AG04450 (cell line): ENCODE measurements at regions of chr22 and their contacts with region 1.

Region 1: GRCh38 chr22:41403532-41404318 is 22.0 kb downstream of the TEF start:
- DNase-seq: peak; percentile 63
- H3K4me3 ChIP-seq: no peak overlapping the region
- H3K27ac ChIP-seq: no peak overlapping the region
- H3K27me3 ChIP-seq: no peaks in the 10 kb centered on the region
- CTCF ChIP-seq: peak; percentile 92

Region 2: GRCh38 chr22:41091132-41092022 is 312.3 kb before region 1 on chr22:
- CTCF ChIA-PET with region 1: no interaction called
- POLR2A ChIA-PET with region 1: no interaction called
- DNase-seq: peak; percentile 98
- H3K4me3 ChIP-seq: peak overlapping the region; percentile 85
- H3K27ac ChIP-seq: peak overlapping the region; percentile 99
- H3K27me3 ChIP-seq: no peaks in the 10 kb centered on the region
- CTCF ChIP-seq: no peak

Region 3: DNA sequence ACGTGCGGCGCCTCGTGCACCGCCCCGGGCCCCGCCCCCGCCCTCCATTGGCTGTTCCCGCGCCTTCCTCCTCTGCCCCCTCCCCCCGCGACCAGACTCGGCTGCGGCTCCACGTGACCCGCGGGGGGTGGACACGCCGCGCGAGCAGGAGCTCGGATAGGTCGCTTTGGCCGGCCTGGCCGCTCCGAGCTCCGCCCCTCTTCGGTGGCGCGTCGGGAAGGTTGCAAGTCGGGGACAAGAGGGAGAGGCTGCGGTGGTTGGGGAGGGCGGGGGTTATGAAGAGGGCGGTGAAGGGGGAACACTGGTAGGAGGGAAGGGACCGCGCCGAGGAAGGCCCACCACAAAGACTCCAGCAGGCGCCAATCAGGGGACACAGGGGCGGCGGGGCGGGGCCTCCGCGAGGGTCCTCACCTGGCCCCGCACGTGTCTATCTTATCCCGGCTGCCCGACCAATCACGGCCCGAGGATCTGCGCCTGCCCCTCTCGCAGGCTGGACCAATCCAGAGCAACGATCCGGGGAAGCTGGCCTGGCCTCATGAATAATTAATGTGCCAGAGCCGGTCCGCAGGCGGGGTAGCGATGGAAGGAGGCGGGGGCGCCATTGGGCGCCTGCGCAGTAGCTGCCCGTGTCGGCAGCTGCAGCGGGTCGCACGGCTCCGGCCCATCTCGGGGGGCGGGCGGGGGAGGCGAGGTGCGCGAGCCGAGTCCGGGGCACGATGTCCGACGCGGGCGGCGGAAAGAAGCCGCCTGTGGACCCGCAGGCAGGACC is 22.2 kb before region 1 on chr22 and contains the start of gene TEF:
- CTCF ChIA-PET with region 1: interaction called, 11 read pairs
- POLR2A ChIA-PET with region 1: interaction called, 26 read pairs
- DNase-seq: peak; percentile 98
- H3K4me3 ChIP-seq: peak within 1 kb of the TSS; percentile 74
- H3K27ac ChIP-seq: peak within 1 kb of the TSS; percentile 99
- H3K27me3 ChIP-seq: no peaks in the 10 kb centered on the region
- CTCF ChIP-seq: no peak
- polyA plus RNA-seq, gene TEF: 13.7 and 18.3 TPM in 2 replicates

Region 4: GRCh38 chr22:41448189-41448808 is 44.6 kb after region 1 on chr22:
- CTCF ChIA-PET with region 1: interaction called, 4 read pairs
- POLR2A ChIA-PET with region 1: interaction called, 20 read pairs
- DNase-seq: peak; percentile 97
- H3K4me3 ChIP-seq: peak overlapping the region; percentile 98
- H3K27ac ChIP-seq: peak overlapping the region; percentile 96
- H3K27me3 ChIP-seq: no peaks in the 10 kb centered on the region
- CTCF ChIP-seq: no peak

Region 5: DNA sequence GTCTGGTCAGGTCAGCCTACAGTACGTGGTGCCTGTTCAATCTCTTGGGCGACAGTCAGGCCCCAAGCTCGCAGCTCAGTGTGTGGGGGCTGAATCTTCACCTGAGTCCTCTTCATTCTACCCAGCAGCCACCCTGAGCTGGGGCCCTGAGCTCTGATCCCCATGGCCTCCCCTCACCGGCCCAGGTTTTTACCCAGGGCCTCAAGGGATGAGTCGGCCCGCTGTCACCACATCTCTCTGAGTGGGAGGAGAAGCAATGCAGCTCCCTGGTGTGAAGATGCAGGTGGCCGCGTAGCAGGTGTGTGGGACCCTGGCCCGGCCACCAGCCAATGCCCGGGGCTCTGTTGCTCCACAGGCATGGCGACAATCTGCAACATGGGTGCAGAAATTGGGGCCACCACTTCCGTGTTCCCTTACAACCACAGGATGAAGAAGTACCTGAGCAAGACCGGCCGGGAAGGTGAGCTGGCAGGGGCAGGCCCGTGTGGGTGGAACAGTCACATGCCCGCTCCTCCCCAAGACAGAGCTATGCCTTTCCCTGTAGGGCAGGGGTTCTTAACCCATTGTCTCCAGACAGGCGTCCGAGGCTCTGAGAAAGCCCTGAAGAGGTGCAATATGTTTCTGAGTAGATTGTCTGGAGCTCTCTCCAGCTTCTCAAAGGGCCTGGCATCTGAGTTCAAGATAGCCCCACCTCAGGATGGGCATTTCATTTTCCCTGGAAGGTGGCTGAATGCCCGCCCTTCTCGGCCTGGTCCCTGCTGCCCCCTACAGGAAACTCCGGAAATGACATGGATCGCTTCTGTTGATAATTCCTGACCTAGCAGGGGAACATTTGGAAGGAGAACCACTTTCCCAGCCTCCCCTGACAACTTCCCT is 113.7 kb after region 1 on chr22:
- CTCF ChIA-PET with region 1: interaction called, 141 read pairs
- POLR2A ChIA-PET with region 1: interaction called, 5 read pairs
- DNase-seq: no peak
- H3K4me3 ChIP-seq: no peak overlapping the region
- H3K27ac ChIP-seq: no peak overlapping the region
- H3K27me3 ChIP-seq: no peaks in the 10 kb centered on the region
- CTCF ChIP-seq: peak; percentile 93

Region 6: DNA sequence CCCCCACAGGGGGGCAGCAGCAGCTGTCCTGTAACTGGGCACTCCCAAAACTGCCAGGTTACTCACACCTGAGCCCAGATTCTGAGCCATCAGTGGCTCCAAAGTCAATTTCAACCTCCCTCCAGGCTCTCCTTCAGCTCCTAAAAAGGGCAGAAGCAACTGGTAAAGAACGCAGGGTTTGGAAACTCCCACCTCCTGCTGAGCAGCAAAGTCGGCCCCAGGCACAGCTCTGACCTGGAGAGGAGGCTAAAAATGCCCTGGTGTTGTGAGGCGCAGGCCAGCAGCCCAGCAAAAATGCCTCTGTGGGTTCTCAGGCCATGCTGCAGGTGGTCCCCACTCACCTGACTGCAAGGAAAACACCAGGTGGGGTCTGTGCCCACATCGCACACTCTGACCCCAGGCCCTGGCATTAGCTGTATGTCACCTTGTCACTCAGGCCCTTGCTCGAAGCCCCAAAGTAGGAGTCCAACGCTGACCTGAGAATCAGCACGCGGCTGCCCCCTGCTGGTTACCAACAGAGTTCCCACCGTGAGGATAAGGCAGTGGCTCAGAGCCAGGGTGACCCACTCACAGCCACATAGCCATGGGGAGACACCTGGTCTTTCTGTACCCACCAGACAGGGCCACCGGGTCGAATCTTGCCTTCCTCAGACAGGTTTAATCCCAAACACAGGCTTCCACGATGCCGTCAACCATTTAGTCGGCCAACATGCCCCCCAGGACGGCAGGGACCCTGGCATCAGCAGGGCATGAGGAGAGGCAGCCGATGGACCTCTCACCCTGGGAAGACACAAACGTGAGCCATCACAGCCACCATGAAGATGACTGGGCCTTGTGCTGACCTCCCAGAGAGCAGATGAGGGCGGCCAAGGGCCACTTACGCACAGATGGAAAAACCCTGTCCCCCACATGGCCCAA is 129.4 kb after region 1 on chr22:
- CTCF ChIA-PET with region 1: interaction called, 46 read pairs
- POLR2A ChIA-PET with region 1: no interaction called
- DNase-seq: no peak
- H3K4me3 ChIP-seq: no peak overlapping the region
- H3K27ac ChIP-seq: no peak overlapping the region
- H3K27me3 ChIP-seq: no peaks in the 10 kb centered on the region
- CTCF ChIP-seq: peak; percentile 80

Region 7: DNA sequence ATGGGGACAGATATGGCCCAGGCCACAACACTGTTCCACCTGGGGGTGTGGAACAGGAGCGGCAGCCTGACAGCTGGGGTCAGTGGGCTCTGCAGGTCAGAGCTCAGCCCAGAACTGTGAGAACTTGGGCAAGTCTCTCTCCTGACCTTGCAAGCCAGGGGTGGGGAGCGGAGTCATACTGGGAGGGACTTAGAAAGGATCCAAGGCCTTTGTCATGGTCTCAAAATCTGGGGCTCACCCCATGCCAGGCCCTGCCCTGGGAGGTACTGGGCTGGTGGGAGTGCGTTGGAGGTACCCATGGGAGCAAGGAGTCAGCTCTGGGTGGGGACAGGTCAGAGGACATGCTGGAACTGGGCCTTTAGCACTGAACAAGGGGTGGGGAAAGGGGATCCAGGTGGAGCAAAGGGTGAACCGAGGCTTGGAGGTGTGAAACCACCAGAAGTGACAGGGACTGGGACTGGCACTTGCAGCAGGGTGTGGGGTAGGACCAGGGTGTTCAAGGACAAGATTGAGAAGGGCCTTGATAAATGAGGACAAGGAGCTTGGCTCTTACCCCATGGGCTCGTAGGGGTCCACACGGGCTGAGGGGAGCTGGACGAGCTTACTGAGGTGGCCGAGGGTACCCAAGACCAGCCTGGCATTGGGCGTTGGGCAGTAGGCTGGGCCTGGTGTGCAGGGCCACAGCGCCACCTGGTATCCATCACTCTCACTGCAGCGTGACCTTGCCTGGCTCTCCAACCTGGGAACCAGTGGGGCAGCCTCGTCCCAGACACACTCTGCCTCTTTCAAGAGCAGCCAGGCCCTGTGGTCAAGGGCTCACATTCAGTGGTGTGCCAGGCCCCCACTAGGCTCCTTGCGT is 193.3 kb after region 1 on chr22:
- CTCF ChIA-PET with region 1: interaction called, 16 read pairs
- POLR2A ChIA-PET with region 1: no interaction called
- DNase-seq: no peak
- H3K4me3 ChIP-seq: no peak overlapping the region
- H3K27ac ChIP-seq: peak overlapping the region; percentile 31
- H3K27me3 ChIP-seq: no peaks in the 10 kb centered on the region
- CTCF ChIP-seq: peak; percentile 71